Heart right ventricle (tissue), 16 donors: ENCODE measurements at regions of chr12 and their contacts with region 1.

Region 1: DNA sequence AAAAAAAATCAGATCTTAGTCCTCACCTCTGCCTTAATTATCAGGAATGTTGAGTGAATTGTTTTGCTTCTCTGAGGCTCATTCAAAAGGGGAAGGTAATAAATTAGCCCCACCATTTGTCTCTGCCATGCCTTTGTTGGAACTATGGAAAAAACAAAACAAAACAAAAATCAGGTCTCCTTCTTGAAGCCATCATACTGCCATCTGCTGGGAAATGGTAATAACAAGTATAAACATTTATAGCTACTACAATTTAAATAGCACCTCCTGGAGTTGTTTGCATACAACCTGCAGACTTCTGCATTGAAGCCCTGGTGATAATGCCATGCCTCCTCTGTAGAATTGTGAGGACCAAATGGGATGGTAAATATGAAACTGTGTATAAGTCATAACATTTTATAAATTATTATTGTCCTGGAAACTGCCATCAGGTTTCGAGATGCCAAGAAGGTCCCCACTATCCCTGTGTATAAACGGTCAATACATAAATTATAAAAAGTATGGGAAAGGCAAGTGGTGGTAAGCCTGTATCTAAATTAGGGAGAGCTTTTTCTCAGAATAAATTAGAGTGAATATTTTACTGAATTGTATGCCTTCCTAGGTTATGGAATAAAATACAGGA is 87.2 kb upstream of the FGD4 start:
- DNase-seq: no peak
- ATAC-seq: peak in 2 of 8 donors; percentile 62 to 64
- H3K4me3 ChIP-seq: no peak overlapping the region
- H3K27ac ChIP-seq: peak overlapping the region in 1 of 10 donors; percentile 47
- H3K4me1 ChIP-seq: peaks cover 0 to 22% (median 5%) of the 10 kb centered on the region in 9 donors
- H3K27me3 ChIP-seq: no peaks in the 10 kb centered on the region
- CTCF ChIP-seq: peak; percentile 18 to 71 (median 55)

Region 2: GRCh38 chr12:31650927-31651326 is 661.2 kb before region 1 on chr12:
- intact Hi-C with region 1: loop called in 7 of 10 experiments (anchors 2 to 10 kb)
- DNase-seq: no peak
- ATAC-seq: peak in 5 of 8 donors; percentile 32 to 67 (median 47)
- H3K4me3 ChIP-seq: no peak overlapping the region
- H3K27ac ChIP-seq: peak overlapping the region in 5 of 10 donors; percentile 2 to 60 (median 25)
- H3K4me1 ChIP-seq: peaks cover 0 to 25% (median 10%) of the 10 kb centered on the region in 9 donors
- H3K27me3 ChIP-seq: no peaks in the 10 kb centered on the region
- CTCF ChIP-seq: no peak

Region 3: DNA sequence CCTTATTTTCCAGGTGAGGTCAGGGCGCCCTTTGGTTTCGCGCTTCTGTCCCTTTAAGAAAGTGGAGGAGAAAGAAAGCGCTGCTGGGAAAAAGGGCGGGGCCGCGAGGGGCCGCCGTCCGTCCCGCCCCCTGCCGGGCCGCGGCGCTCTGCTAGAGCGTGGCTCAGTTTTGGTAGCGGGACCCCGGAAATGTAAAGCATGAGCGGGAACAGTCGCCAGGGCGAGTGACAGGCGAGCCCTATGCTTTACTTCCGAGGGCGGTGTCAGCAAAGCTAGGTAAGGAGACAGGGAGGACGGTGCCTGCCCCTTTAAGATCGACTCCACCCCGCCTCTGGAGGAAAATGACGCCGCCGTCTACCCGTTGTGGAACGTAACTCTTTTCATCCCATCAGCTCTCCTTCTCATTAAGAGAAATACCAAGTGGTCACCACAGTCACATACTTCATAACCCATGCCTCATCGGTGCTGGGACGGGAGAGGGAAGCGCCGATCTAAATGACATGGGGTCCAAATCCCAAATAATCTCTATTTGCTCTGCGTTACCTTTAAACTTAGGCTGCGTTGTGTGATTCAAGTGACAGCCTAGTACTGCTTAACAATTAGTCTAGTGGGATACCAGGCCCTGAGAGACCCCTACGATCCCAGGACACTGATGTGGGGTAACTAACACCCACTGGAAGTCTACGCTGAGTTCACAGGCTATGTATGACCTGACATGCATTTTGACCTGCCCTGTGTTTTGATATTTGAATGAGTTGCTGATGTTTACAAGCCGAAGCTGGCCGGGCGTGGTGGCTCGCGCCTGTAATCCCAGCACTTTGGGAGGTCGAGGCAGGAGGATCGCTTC is 652.9 kb before region 1 on chr12 and contains the start of gene ETFBKMT:
- intact Hi-C with region 1: loop called in 8 of 10 experiments (anchors 2 to 10 kb)
- DNase-seq: peak; percentile 84 to 89
- ATAC-seq: peak; percentile 93 to 97 (median 96)
- H3K4me3 ChIP-seq: peak within 1 kb of the TSS; percentile 30 to 78 (median 67)
- H3K27ac ChIP-seq: peak within 1 kb of the TSS; percentile 83 to 98 (median 94)
- H3K4me1 ChIP-seq: peaks cover 0 to 19% (median 11%) of the 10 kb centered on the region in 9 donors
- H3K27me3 ChIP-seq: no peaks in the 10 kb centered on the region
- CTCF ChIP-seq: peak in 8 of 9 donors; percentile 23 to 74 (median 50)
- total RNA-seq, gene ETFBKMT: 5.5 to 8.7 (median 6.2) TPM

Region 4: GRCh38 chr12:31682136-31682962 is 629.8 kb before region 1 on chr12:
- intact Hi-C with region 1: loop called in 7 of 10 experiments (anchors 2 to 10 kb)
- DNase-seq: peak; percentile 17 to 50
- ATAC-seq: peak; percentile 64 to 89 (median 78)
- H3K4me3 ChIP-seq: no peak overlapping the region
- H3K27ac ChIP-seq: peak overlapping the region in 1 of 10 donors; percentile 16
- H3K4me1 ChIP-seq: peaks cover 0 to 10% (median 0%) of the 10 kb centered on the region in 9 donors
- H3K27me3 ChIP-seq: no peaks in the 10 kb centered on the region
- CTCF ChIP-seq: peak; percentile 22 to 82 (median 65)

Region 5: DNA sequence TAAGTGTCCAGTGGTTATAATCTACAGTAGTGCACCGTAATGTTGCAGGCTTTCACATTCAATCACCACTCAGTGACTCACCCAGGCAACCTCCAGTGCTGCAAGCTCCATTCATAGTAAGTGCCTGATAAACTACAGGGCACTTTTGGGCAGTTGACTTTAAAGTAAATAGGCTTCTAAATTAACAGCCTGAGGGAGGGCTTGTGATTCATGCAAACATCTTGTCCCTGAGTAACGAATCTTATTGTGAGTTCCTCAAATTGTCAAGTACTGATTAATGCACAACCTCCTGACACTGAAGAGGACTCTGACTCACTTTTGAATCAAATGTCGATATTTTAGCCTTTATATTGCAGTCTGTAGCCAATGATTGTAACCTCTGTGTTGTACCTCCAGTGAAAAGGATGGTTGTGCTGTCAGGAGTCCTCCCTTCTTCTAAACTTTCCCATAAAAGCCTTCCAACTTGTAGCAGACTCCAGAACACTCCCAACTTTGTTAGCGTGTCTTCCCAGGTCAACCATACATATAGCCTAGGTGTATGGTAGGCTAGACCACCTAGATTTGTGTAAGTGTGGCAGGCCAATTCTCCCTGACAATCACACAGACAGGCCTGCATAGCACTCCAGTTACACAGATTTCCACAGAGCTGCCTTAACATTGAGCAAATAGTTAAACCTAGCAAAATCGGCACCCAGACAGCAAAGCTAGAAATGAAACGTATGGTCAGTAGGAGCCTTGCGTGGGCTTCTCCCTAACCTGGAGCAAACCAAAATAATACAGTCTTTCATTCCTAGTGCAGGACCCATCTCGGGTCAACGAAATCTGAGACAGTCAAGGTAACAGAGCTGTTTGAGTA is 260.4 kb before region 1 on chr12:
- intact Hi-C with region 1: loop called in 1 of 10 experiments (anchors 5 kb)
- DNase-seq: no peak
- ATAC-seq: peak in 7 of 8 donors; percentile 16 to 94 (median 84)
- H3K4me3 ChIP-seq: no peak overlapping the region
- H3K27ac ChIP-seq: peak overlapping the region in 1 of 10 donors; percentile 18
- H3K4me1 ChIP-seq: peaks cover 0 to 14% (median 4%) of the 10 kb centered on the region in 9 donors
- H3K27me3 ChIP-seq: no peaks in the 10 kb centered on the region
- CTCF ChIP-seq: no peak

Region 6: GRCh38 chr12:32062881-32063280 is 249.3 kb before region 1 on chr12:
- intact Hi-C with region 1: loop called in 7 of 10 experiments (anchors 1 to 5 kb)
- DNase-seq: no peak
- ATAC-seq: no peak
- H3K4me3 ChIP-seq: no peak overlapping the region
- H3K27ac ChIP-seq: no peak overlapping the region
- H3K4me1 ChIP-seq: peaks cover 0 to 3% (median 0%) of the 10 kb centered on the region in 9 donors
- H3K27me3 ChIP-seq: no peaks in the 10 kb centered on the region
- CTCF ChIP-seq: no peak

Region 7: DNA sequence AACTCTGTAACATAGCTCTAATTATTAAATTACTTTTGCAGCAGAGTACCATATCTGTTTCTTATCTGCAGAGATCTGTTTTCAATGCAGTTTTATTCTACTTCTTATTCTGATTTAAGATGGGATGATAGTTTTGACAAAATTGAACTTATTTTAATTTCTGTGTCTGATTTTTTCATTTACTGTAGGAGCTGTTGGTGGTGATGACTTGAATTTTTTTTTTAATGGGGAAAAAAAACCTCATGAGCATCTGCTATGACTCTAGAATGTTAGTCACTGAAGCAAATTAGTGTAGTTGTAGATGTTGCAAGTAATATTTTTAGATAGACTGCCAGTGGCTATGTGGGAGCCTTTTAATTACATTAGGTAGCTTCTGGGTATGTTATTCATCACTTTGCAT is 390.3 kb after region 1 on chr12:
- intact Hi-C with region 1: no loop called
- DNase-seq: no peak
- ATAC-seq: no peak
- H3K4me3 ChIP-seq: no peak overlapping the region
- H3K27ac ChIP-seq: no peak overlapping the region
- H3K4me1 ChIP-seq: no peaks in the 10 kb centered on the region
- H3K27me3 ChIP-seq: no peaks in the 10 kb centered on the region
- CTCF ChIP-seq: no peak